ENCODE measurements at regions of chr1 and their contacts with region 1.

Region 1: GRCh38 chr1:9455487-9456234 is 83.6 kb upstream of the SLC25A33 start:
- DNase-seq: peak; percentile 63
- H3K4me3 Mint-ChIP-seq: no peak overlapping the region
- H3K27ac Mint-ChIP-seq: no peak overlapping the region
- H3K4me1 Mint-ChIP-seq: no peaks in the 10 kb centered on the region
- H3K27me3 Mint-ChIP-seq: no peaks in the 10 kb centered on the region
- CTCF ChIP-seq: peak; percentile 78

Region 2: DNA sequence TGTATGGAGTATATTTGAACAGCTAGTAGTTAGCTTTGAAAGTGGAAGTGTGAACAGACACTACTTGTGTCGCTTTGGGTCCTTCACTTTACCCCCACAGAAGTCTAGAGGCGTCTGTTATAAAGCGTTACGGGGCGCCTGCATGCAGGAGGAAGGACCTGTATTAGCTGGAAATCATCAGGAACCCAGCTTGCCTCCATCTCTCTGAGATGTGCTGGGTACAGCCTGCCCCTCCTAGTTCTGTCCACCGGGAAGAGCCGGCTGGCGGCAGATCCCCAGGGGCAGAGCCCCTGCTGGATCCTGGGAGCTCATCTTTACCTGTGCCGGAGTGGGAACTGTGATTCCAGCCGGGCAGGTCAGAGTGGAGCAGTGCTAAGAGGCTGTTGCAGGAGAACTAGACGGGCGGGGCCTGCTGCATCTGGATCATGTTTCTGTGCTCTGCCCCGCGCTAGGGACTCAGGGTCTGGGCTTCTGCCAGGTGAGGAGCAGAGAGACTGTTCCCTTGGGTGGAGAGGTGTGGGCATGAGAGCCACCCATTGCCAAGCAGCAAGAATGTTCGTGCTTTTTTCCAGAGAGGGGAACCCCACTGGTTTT is 185.3 kb before region 1 on chr1:
- CTCF ChIA-PET with region 1: interaction called, 14 read pairs
- POLR2A ChIA-PET with region 1: no interaction called
- intact Hi-C with region 1: loop called (anchors 1 kb)
- DNase-seq: peak; percentile 47
- H3K4me3 Mint-ChIP-seq: no peak overlapping the region
- H3K27ac Mint-ChIP-seq: no peak overlapping the region
- H3K4me1 Mint-ChIP-seq: peaks cover 12% of the 10 kb centered on the region
- H3K27me3 Mint-ChIP-seq: no peaks in the 10 kb centered on the region
- CTCF ChIP-seq: no peak

Region 3: GRCh38 chr1:9438431-9439073 is 17.1 kb before region 1 on chr1:
- CTCF ChIA-PET with region 1: interaction called, 11 read pairs
- POLR2A ChIA-PET with region 1: interaction called, 3 read pairs
- intact Hi-C with region 1: no loop called
- DNase-seq: peak; percentile 91
- H3K4me3 Mint-ChIP-seq: peak overlapping the region; percentile 55
- H3K27ac Mint-ChIP-seq: peak overlapping the region; percentile 94
- H3K4me1 Mint-ChIP-seq: peaks cover 30% of the 10 kb centered on the region
- H3K27me3 Mint-ChIP-seq: no peaks in the 10 kb centered on the region
- CTCF ChIP-seq: no peak

Measured in MCF 10A (cell line).